Left cardiac atrium (tissue), 4 donors: ENCODE measurements at regions of chr9 and their contacts with region 1.

Region 1: GRCh38 chr9:83937911-83938323 is 16.7 kb upstream of the KIF27 start:
- DNase-seq: no peak
- ATAC-seq: peak in 1 of 2 donors; percentile 56

Region 2: GRCh38 chr9:84002344-84002743 is 64.4 kb after region 1 on chr9:
- intact Hi-C with region 1: no loop called
- DNase-seq: no peak
- ATAC-seq: peak in 1 of 2 donors; percentile 24

Region 3: DNA sequence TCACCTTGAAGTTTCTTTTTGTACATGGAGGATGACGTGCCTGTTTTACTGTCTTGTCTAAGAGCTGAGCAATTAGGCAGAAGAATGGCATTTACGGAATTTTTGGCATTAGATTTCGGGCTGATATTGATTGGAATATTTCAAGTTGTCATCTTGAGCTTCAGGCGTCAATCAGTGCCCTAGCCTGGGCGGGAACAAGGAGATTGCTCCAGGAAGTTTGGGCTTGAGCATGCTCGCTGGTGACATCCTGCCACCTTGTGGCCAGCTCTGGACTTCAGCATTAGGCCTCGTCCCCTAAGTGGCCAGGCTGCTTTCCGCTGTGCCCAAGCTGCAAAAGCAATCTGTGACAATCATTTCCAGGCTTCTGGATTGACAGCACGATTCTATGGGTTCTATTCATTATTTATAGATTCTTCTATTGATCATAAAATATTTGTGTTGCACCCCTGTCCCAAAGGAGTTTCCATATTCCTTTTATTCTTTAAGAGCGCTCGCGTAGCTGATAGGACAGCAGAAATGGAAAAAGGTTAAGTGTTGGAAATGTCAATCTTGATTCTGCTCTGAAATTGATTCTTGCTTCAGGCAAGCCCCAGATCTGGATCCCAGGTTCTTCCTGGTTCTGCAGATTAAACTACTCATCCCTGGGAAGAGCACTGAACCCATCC is 323.3 kb after region 1 on chr9:
- intact Hi-C with region 1: loop called (anchors 1 to 5 kb)
- DNase-seq: peak; percentile 85
- ATAC-seq: peak; percentile 97 to 98

Region 4: GRCh38 chr9:84315278-84315877 is 377.5 kb after region 1 on chr9:
- intact Hi-C with region 1: loop called in 1 of 2 experiments (anchors 2 kb)
- DNase-seq: peak; percentile 56
- ATAC-seq: peak; percentile 38 to 66